ENCODE measurements at regions of chr11 and their contacts with region 1.

Region 1: GRCh38 chr11:117226388-117227385 is 5.2 kb downstream of the PCSK7 start:
- DNase-seq: peak; percentile 64
- ATAC-seq: peak; percentile 55
- H3K4me3 Mint-ChIP-seq: no peak overlapping the region
- H3K27ac Mint-ChIP-seq: peak overlapping the region; percentile 20
- H3K4me1 Mint-ChIP-seq: peaks cover 37% of the 10 kb centered on the region
- H3K27me3 Mint-ChIP-seq: no peaks in the 10 kb centered on the region

Region 2: DNA sequence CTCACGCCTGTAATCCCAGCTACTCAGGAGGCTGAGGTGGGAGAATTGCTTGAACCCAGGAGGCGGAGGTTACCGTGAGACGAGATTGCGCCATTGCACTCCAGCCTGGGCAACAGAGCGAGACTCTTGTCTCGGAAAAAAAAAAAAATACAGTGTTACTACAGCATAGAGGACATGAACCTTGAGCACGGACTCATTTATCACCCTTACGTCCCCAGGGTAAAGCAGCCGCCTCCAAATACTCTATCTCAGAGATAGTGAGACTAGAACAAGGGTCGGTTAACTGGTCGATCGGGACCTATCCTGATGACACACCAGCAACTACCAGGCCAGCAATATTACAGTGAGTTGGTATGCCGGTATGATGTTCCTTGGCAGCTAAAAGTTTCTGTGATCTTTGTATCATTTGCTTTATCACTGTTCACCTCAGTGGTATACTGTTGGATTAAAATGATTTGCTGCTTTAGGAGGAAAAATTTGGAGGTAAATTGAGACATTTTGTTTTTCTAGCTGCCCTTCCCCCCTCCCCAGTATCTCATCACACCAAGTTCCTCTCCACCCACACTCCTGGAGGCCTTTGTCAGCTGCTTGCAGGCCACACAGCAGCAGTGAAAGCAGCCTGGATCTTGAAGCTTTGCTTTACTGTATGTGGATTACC is 55.2 kb before region 1 on chr11:
- CTCF ChIA-PET with region 1: interaction called, 11 read pairs
- POLR2A ChIA-PET with region 1: no interaction called
- DNase-seq: no peak
- ATAC-seq: no peak
- H3K4me3 Mint-ChIP-seq: no peak overlapping the region
- H3K27ac Mint-ChIP-seq: peak overlapping the region; percentile 11
- H3K4me1 Mint-ChIP-seq: peaks cover 11% of the 10 kb centered on the region
- H3K27me3 Mint-ChIP-seq: no peaks in the 10 kb centered on the region

Region 3: DNA sequence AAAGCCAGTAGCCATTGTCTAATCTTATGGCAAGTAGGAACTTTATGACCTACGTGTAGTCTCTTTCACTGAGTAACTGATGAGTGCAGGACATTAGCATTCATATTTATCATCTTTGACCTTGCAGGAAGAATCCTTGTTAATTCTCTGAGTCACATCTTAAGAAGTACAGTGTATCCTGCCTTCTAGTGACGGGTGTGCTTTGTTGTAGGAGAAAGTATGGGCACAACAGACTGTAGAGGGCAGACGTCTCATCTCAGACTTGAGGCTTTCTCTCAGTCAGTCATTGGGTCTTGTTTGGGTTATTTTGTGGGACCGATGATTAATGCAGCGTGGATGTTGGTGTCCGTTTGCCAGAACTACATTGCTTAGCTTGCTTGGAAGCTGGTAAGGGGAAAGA is 12.6 kb after region 1 on chr11:
- CTCF ChIA-PET with region 1: interaction called, 11 read pairs
- POLR2A ChIA-PET with region 1: no interaction called
- DNase-seq: no peak
- ATAC-seq: no peak
- H3K4me3 Mint-ChIP-seq: no peak overlapping the region
- H3K27ac Mint-ChIP-seq: no peak overlapping the region
- H3K4me1 Mint-ChIP-seq: peaks cover 2% of the 10 kb centered on the region
- H3K27me3 Mint-ChIP-seq: no peaks in the 10 kb centered on the region